ENCODE measurements at regions of chr11 and their contacts with region 1.

Region 1: DNA sequence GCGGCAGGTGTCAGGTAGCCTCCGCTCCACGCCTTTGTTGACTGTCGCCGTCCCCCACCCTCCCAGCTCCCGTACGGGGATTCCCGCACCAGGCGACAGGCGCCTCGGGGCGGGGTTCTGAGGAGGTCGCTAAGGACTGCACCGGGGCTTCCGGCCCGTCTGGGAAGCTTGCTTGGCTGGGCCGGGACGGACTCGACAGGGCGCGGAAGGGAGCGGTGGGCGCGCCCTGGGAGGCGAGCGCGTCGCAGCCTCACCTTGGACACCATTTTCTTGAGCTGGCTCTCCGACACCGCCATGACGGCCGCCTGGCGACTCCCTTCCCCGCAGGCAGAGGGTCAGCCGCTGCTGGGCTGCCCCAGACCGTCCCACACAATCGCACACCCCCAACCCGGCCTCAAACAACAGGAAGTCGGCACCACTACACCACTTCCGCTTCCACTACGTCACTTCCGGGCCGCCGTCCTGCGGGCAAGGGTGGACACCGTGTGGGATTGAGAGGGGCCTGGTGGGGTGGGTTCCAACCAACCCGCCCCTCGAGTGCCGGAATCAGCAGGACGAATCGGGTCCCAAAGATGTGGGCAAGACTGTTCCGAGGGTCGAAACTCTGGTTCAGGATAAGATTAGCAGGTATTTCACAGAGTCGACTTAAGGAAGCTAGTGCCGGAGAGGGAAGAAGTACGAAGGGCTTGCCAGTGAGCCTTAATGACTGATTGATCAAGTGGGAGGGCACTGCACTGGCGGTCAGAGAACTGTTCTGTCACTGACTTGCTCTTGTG is at the start of gene TSG101:
- DNase-seq: peak; percentile 96 to 97
- H3K4me3 ChIP-seq: peak within 1 kb of the TSS; percentile 60
- H3K4me3 Mint-ChIP-seq: peak within 1 kb of the TSS; percentile 91
- H3K27ac Mint-ChIP-seq: peak within 1 kb of the TSS; percentile 96
- H3K4me1 ChIP-seq: no peaks in the 10 kb centered on the region
- H3K4me1 Mint-ChIP-seq: no peaks in the 10 kb centered on the region
- H3K27me3 ChIP-seq: no peaks in the 10 kb centered on the region
- H3K27me3 Mint-ChIP-seq: no peaks in the 10 kb centered on the region
- CTCF ChIP-seq: no peak
- total RNA-seq, gene TSG101: 64.6 and 86.6 TPM in 2 replicates

Region 2: GRCh38 chr11:18321980-18322711 is 204.6 kb before region 1 on chr11 and contains the starts of genes GTF2H1 and HPS5:
- CTCF ChIA-PET with region 1: no interaction called
- POLR2A ChIA-PET with region 1: no interaction called
- intact Hi-C with region 1: loop called (anchors 5 kb)
- DNase-seq: peak; percentile 96 to 99
- H3K4me3 ChIP-seq: peak within 1 kb of the TSS; percentile 87
- H3K4me3 Mint-ChIP-seq: peak within 1 kb of the TSS; percentile 84
- H3K27ac Mint-ChIP-seq: peak within 1 kb of the TSS; percentile 100
- H3K4me1 ChIP-seq: peaks cover 19% of the 10 kb centered on the region
- H3K4me1 Mint-ChIP-seq: peaks cover 30% of the 10 kb centered on the region
- H3K27me3 ChIP-seq: no peaks in the 10 kb centered on the region
- H3K27me3 Mint-ChIP-seq: no peaks in the 10 kb centered on the region
- CTCF ChIP-seq: peak in 1 of 2 experiments; percentile 1
- total RNA-seq, gene GTF2H1: 63.0 and 72.0 TPM in 2 replicates
- total RNA-seq, gene HPS5: 17.5 TPM in 2 replicates

Region 3: DNA sequence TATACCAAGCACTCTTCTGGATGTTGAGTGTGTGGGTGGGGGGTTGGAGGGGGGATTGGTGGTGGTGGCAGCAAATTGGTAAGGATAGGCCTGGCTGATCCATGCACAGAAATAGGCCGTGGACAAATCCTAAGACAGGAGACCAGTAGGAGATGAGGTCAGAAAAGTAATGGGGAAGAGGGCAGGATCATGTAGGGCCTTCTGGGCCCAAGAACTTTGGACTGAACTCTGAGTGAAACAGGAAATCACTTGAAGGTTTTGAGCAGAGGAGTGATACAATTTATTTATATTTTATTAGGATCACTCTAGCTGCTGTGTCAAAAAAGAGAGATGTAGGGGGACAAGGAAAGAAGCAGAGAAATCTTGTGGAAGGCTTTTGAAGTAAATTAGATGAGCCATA is 28.7 kb before region 1 on chr11:
- CTCF ChIA-PET with region 1: no interaction called
- POLR2A ChIA-PET with region 1: no interaction called
- intact Hi-C with region 1: no loop called
- DNase-seq: no peak
- H3K4me3 ChIP-seq: no peak overlapping the region
- H3K4me3 Mint-ChIP-seq: no peak overlapping the region
- H3K27ac Mint-ChIP-seq: no peak overlapping the region
- H3K4me1 ChIP-seq: peaks cover 3% of the 10 kb centered on the region; the same call in 1 of the 2 replicates
- H3K4me1 Mint-ChIP-seq: no peaks in the 10 kb centered on the region
- H3K27me3 ChIP-seq: no peaks in the 10 kb centered on the region
- H3K27me3 Mint-ChIP-seq: no peaks in the 10 kb centered on the region
- CTCF ChIP-seq: no peak

Region 4: DNA sequence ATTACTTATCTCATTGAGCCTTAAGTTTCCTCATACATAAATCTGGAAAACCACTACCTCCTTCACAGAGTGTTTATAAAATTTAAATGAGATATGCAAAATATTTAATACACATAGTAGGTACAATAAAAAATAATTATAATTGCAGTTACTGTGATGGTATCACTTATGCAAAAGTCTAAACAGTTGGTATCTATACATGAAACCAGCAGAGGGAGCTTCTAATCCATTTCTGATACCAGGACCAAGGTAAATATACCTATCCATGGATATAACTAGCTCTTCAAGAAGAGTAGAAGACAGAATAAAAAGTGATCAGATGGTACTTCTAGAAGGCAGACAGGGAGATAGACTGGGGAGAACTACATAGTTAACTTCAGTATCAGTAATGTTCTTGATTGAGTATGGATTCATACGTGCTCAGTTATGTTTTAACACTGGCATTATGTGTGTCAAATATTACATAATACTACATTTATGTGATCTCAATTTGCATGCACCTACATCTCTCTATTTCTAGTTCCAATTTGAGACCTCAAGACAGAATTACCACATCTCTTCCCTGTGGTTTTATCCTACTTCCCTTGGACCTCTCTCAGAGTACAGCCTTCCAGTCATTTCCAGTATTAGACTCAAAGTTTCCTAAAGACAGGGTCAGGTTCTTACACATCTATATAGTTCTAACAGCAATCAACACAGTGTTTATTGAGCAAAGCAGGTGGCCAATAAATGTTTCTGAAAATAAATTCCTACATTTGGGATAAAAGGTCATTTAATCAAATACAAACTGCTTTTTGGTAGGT is 13.7 kb after region 1 on chr11:
- CTCF ChIA-PET with region 1: interaction called, 11 read pairs
- POLR2A ChIA-PET with region 1: interaction called, 6 read pairs
- intact Hi-C with region 1: no loop called
- DNase-seq: peak in 1 of 2 experiments; percentile 37
- H3K4me3 ChIP-seq: no peak overlapping the region
- H3K4me3 Mint-ChIP-seq: no peak overlapping the region
- H3K27ac Mint-ChIP-seq: no peak overlapping the region
- H3K4me1 ChIP-seq: 0 out of 2 replicates have a peak, but pooled peaks cover 6% of the 10 kb centered on the region
- H3K4me1 Mint-ChIP-seq: no peaks in the 10 kb centered on the region
- H3K27me3 ChIP-seq: no peaks in the 10 kb centered on the region
- H3K27me3 Mint-ChIP-seq: no peaks in the 10 kb centered on the region
- CTCF ChIP-seq: peak; percentile 58 to 65

Region 5: DNA sequence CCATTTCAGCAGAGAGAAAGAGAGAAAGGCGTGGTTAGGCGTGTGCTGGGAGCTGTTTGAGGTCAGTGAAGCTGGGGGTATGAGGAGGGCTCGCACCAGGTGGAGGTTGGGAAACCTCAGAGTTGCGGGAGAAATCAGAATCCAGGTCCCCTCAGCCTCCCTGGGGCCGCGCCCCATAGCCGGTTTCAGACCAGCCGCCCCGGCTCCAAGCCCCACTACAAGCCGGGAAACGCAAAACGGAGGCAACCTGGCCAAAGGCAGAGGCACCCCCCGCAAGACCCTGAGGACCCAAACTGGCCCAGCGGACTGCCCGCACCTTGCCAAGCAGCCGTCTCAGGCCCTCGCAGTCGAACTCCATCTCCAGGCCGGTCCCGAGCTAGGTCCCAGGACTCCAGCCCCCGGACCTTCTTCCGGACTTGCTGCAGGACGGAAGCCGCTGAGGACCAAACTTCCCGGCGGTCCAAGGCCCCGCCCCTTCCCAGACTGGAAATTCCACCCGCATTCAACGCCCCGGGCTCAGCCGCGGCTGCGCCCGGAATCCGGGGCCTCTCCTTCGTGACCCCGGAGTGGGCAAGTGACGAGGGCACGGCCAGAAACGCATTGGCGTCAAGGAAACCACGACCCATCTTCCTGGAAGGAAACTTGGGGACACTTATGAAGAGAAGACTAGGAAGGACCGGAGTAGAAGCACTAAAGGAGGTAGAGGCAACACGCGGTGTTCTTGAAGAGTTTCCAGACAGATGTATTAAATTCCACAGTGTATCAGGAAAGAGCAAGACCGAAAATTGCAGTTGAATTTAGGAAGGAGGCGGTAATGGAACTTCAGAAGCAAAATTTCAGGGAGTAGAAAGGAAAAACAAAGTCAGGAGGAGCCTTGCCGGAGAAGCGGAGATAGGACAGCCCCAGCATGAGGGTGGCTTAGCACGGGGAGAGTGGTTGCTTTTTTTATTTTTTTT is 61.9 kb after region 1 on chr11 and contains the start of gene UEVLD:
- CTCF ChIA-PET with region 1: no interaction called
- POLR2A ChIA-PET with region 1: interaction called, 13 read pairs
- intact Hi-C with region 1: no loop called
- DNase-seq: peak; percentile 94
- H3K4me3 ChIP-seq: peak within 1 kb of the TSS; percentile 73
- H3K4me3 Mint-ChIP-seq: no peak within 1 kb of the TSS
- H3K27ac Mint-ChIP-seq: no peak within 1 kb of the TSS
- H3K4me1 ChIP-seq: peaks cover 14% of the 10 kb centered on the region; the same call in 1 of the 2 replicates
- H3K4me1 Mint-ChIP-seq: no peaks in the 10 kb centered on the region
- H3K27me3 ChIP-seq: no peaks in the 10 kb centered on the region
- H3K27me3 Mint-ChIP-seq: no peaks in the 10 kb centered on the region
- CTCF ChIP-seq: no peak
- total RNA-seq, gene UEVLD: 15.9 and 19.2 TPM in 2 replicates

Region 6: DNA sequence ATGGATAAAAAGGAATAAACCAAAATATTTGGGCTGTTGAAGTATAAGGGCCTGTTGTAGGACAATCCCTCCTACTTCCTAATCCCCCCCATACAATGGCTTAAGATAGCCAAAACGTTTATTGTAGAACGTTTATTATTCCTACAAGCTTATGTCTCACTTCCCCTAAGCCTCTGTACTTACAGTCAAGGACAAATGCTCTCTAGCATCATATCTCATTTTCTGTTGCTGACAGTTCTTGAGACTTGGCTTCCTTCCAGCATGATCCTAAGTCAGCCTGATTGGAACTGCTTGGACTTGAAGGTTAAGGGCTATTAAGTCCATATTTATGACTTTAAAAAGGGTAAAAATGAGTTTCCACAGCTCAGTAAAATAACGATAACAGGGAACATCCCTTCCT is 81.7 kb after region 1 on chr11:
- CTCF ChIA-PET with region 1: no interaction called
- POLR2A ChIA-PET with region 1: no interaction called
- intact Hi-C with region 1: no loop called
- DNase-seq: no peak
- H3K4me3 ChIP-seq: no peak overlapping the region
- H3K4me3 Mint-ChIP-seq: no peak overlapping the region
- H3K27ac Mint-ChIP-seq: no peak overlapping the region
- H3K4me1 ChIP-seq: no peaks in the 10 kb centered on the region
- H3K4me1 Mint-ChIP-seq: no peaks in the 10 kb centered on the region
- H3K27me3 ChIP-seq: no peaks in the 10 kb centered on the region
- H3K27me3 Mint-ChIP-seq: no peaks in the 10 kb centered on the region
- CTCF ChIP-seq: no peak

Region 7: GRCh38 chr11:18624161-18624560 is 97.5 kb after region 1 on chr11:
- CTCF ChIA-PET with region 1: no interaction called
- POLR2A ChIA-PET with region 1: no interaction called
- intact Hi-C with region 1: no loop called
- DNase-seq: no peak
- H3K4me3 ChIP-seq: no peak overlapping the region
- H3K4me3 Mint-ChIP-seq: no peak overlapping the region
- H3K27ac Mint-ChIP-seq: no peak overlapping the region
- H3K4me1 ChIP-seq: no peaks in the 10 kb centered on the region
- H3K4me1 Mint-ChIP-seq: no peaks in the 10 kb centered on the region
- H3K27me3 ChIP-seq: no peaks in the 10 kb centered on the region
- H3K27me3 Mint-ChIP-seq: no peaks in the 10 kb centered on the region
- CTCF ChIP-seq: no peak